ENCODE measurements at regions of chr2 and their contacts with region 1.

Region 1: DNA sequence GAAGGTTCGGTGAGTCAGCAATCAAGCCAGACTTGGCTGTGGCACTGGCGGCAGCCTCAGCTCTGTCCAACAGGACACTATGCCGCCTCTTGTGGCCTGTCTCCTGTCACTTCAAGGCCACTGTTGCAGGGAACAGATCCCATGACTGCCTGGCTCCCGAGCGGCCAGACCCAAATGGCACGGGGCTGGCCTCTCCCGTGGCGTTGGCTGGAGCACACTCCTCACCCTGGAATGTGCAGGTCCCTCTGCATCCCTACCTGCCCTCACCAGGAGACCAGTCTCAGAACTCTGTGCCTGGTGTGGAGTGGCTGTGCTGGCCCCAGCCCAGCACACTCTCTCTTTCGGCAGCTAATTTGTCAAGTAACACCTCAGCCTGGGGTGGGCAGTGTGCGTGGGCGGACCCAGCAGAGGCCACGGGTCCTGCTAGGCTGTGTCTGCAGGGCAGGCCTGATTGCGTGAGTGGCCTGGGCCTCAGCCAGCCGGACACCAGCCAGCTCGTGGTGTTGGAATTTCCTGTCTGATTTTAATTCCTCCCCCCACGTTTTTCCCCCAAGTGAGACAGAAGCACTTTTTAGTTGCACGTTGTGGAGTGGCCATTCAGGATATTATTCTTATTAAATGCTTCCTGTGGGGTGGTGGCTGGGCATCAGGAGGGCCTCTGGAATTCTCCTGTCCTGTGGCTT is 179.3 kb downstream of the GLI2 start:
- DNase-seq: peak; percentile 88 to 91
- ATAC-seq: peak; percentile 93 to 95
- H3K4me3 ChIP-seq: no peak overlapping the region
- H3K27ac ChIP-seq: peak overlapping the region; percentile 31 to 63 (median 49)
- H3K4me1 ChIP-seq: peaks cover 25 to 32% of the 10 kb centered on the region in 2 donors
- H3K27me3 ChIP-seq: no peaks in the 10 kb centered on the region
- CTCF ChIP-seq: peak in 4 of 5 experiments; percentile 21 to 47 (median 36)
- POLR2A ChIP-seq: no peak

Region 2: GRCh38 chr2:120867290-120868241 is 47.4 kb before region 1 on chr2:
- in situ Hi-C with region 1: no loop called
- intact Hi-C with region 1: loop called (anchors 2 kb)
- DNase-seq: peak; percentile 67 to 73
- ATAC-seq: peak; percentile 84 to 85
- H3K4me3 ChIP-seq: peak overlapping the region; percentile 46 to 66 (median 50)
- H3K27ac ChIP-seq: peak overlapping the region; percentile 69 to 81 (median 78)
- H3K4me1 ChIP-seq: peaks cover 4 to 16% of the 10 kb centered on the region in 2 donors
- H3K27me3 ChIP-seq: no peaks in the 10 kb centered on the region
- CTCF ChIP-seq: peak in 2 of 5 experiments; percentile 12 to 23
- POLR2A ChIP-seq: peak; percentile 11 to 32

Region 3: GRCh38 chr2:120879431-120880295 is 35.3 kb before region 1 on chr2:
- in situ Hi-C with region 1: no loop called
- intact Hi-C with region 1: loop called (anchors 2 kb)
- DNase-seq: peak in 1 of 2 donors; percentile 61
- ATAC-seq: peak; percentile 53 to 66
- H3K4me3 ChIP-seq: peak overlapping the region in 1 of 4 donors; percentile 9
- H3K27ac ChIP-seq: peak overlapping the region in 3 of 4 donors; percentile 5 to 65 (median 20)
- H3K4me1 ChIP-seq: peaks cover 33 to 37% of the 10 kb centered on the region in 2 donors
- H3K27me3 ChIP-seq: no peaks in the 10 kb centered on the region
- CTCF ChIP-seq: peak in 3 of 5 experiments; percentile 28 to 53 (median 41)
- POLR2A ChIP-seq: no peak

Region 4: DNA sequence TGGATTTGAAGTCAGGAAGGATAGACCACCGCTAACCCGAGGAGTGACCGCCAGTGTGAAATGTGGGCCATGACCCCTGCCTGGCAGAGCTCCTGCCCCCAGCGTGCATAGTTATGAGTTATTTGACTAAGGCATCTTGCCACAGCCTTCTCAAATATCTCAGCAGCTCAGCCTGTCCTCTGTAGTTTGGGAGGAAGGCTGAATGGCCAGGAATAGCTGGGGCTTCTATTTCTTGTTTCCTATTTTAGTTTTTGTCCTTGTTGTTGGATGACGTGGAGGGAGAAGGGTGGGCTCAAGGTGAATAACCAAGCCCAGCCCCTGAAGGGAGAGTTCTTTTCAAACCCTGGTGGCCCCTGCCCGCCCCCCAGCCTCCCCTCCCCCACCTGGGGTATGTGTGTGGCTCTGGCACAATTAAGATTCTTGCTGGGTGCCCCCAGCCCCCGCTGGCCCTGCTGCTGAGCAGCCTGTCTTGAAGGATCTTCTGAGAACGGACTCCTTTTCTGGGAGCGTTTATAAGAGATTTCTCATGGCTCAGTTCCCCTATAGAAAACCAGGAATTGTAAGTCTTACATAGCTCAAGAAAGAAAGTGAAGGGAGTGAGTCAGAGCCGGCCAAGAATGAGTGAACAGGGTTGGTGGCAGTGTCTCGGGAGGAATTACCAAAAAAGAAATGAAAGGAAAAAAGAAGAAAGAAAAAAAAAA is 21.9 kb before region 1 on chr2:
- in situ Hi-C with region 1: no loop called
- intact Hi-C with region 1: loop called (anchors 2 kb)
- DNase-seq: peak; percentile 55 to 69
- ATAC-seq: peak; percentile 87 to 88
- H3K4me3 ChIP-seq: peak overlapping the region; percentile 19 to 31 (median 24)
- H3K27ac ChIP-seq: peak overlapping the region; percentile 80 to 89 (median 88)
- H3K4me1 ChIP-seq: peaks cover 42 to 52% of the 10 kb centered on the region in 2 donors
- H3K27me3 ChIP-seq: no peaks in the 10 kb centered on the region
- CTCF ChIP-seq: no peak
- POLR2A ChIP-seq: peak in 1 of 2 donors; percentile 26

Region 5: DNA sequence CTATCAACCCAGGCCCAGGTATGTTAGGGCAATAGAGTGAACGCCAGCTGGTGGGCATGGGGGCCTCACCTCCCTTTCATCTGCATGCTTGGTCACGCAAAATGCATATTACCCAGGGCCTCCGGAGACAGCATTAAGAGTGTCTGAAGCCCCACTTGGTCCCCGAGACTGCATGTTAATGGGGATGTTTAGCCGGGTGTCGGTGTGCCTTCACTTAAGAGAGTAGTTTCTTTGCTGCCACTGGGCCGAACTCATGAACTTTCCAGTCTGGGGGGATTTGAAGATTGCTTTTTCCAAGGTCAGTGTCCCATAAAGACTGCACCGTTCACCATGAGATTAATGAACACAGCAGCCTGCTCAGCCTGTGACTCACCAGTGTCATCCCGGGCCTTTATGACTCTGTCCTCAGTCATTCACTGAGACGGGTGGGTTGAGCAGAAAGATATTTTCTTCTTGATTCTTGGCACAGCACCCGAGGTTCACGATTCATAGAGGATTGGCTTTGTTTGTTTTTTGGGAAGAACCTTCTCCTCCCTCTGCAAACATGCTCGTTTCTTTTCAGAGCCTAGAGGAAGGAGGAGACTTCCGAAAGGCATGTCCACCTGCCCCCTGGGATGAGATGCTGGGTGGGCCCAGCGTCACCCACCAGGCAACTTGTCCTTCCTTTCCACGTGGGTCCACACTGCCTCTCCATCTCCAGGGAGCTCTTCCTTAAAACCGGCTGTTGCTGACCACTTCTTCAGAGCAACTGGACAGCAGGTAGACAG is 19.8 kb after region 1 on chr2:
- in situ Hi-C with region 1: no loop called
- intact Hi-C with region 1: loop called (anchors 2 kb)
- DNase-seq: peak; percentile 45 to 49
- ATAC-seq: peak; percentile 67 to 68
- H3K4me3 ChIP-seq: no peak overlapping the region
- H3K27ac ChIP-seq: peak overlapping the region; percentile 22 to 38 (median 28)
- H3K4me1 ChIP-seq: peaks cover 52 to 65% of the 10 kb centered on the region in 2 donors
- H3K27me3 ChIP-seq: no peaks in the 10 kb centered on the region
- CTCF ChIP-seq: no peak
- POLR2A ChIP-seq: no peak

Region 6: GRCh38 chr2:121284463-121285449 is 369.8 kb after region 1 on chr2 and contains the start of gene TFCP2L1:
- in situ Hi-C with region 1: no loop called
- intact Hi-C with region 1: no loop called
- DNase-seq: no peak
- ATAC-seq: peak; percentile 21 to 37
- H3K4me3 ChIP-seq: peak within 1 kb of the TSS; percentile 42 to 58 (median 46)
- H3K27ac ChIP-seq: peak within 1 kb of the TSS in 1 of 4 donors; percentile 10
- H3K4me1 ChIP-seq: no peaks in the 10 kb centered on the region
- H3K27me3 ChIP-seq: peaks cover 19 to 26% (median 23%) of the 10 kb centered on the region in 3 donors
- CTCF ChIP-seq: no peak
- POLR2A ChIP-seq: peak; percentile 27 to 45
- total RNA-seq, gene TFCP2L1: 1.2 to 3.2 (median 1.8) TPM

Measured in gastrocnemius medialis (tissue), 4 donors.